AG04449 (cell line): ENCODE measurements at regions of chr9 and their contacts with region 1.

Region 1: GRCh38 chr9:34994260-34994899 is 4.8 kb downstream of the DNAJB5 start:
- DNase-seq: no peak
- H3K4me3 ChIP-seq: no peak overlapping the region
- CTCF ChIP-seq: peak; percentile 78

Region 2: DNA sequence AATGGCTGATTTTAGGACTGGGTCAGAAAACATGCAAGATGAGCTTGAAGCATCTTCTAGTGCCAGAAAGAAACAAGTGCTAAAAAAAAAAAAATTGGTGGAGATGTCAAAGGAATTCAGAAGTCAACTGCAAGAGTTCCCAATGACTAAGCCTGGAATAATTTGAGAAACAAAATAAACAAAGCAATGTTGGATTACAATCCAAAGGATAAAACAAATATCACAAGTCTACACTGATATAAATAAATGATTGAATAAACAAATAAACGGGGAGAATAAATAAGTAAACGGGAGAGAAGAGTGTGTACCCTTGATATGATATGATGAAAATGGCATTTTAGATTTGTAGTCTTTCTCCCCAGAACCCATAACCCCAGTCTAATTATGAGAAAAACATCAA is 221.0 kb before region 1 on chr9:
- CTCF ChIA-PET with region 1: no interaction called
- POLR2A ChIA-PET with region 1: no interaction called
- DNase-seq: no peak
- H3K4me3 ChIP-seq: no peak overlapping the region
- CTCF ChIP-seq: no peak

Region 3: DNA sequence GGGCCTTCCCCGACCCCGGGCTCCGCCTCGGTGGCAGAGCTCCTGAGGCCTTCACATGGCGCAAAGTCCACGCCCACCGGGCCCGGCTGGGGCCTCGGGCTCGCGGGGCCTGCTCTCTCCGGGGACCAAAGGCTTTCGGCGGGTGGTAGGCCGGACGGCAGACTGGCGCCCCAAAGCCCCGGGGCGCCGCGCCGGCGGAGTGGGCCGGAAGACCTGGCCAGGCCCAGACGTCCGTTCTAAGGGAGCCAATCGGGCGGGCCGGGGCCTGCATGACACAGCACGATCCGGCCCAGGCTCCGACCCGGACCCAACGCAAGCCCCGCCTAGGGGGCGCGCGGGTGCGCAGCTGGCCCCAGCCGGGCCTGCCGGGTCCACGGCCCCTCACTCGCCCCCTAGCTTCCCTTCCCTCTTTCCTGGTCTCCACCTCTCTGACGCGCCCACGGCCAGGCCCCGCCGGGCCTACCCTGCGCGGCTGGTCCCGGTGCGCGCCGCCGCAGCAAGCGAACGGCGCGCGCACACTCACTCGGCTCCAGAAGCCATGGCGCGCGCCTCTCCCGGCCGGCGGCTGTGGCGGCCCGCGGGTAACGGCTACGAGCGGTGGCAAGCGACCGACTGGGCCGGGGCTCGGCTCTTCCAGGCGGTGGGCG is 77.6 kb after region 1 on chr9:
- CTCF ChIA-PET with region 1: interaction called, 10 read pairs
- POLR2A ChIA-PET with region 1: interaction called, 5 read pairs
- DNase-seq: no peak
- H3K4me3 ChIP-seq: peak overlapping the region; percentile 94
- CTCF ChIP-seq: peak; percentile 40

Region 4: DNA sequence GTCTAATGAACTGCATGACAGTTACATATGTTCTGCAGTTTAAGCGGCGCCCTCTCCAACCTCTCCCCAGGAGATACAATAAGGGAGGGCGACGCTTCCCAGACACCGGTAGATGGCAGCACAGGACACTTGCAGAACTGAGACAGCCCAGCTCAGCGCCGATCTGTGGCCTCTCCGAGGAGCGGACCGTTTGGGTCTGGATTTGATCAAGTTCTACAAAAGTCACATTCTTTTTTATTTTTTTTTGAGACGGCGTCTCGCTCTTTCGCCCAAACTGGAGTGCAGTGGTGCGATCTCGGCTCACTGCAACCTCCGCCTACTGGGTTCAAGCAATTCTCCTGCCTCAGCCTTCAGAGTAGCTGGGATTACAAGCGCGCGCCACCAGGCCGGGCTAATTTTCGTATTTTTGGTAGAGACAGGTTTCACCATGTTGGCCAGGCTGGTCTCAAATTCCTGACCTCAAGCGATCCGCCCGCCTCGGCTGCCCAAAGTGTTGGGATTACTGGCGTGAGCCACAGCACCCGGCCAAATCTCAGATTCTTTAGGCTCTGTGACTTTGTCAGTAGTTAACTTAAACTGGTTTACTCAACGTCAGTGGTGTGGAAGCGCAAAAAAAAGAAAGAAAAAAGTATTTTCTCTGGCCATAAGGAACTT is 122.6 kb after region 1 on chr9:
- CTCF ChIA-PET with region 1: no interaction called
- POLR2A ChIA-PET with region 1: no interaction called
- DNase-seq: peak; percentile 63
- H3K4me3 ChIP-seq: peak overlapping the region; percentile 99
- CTCF ChIP-seq: peak; percentile 98

Region 5: DNA sequence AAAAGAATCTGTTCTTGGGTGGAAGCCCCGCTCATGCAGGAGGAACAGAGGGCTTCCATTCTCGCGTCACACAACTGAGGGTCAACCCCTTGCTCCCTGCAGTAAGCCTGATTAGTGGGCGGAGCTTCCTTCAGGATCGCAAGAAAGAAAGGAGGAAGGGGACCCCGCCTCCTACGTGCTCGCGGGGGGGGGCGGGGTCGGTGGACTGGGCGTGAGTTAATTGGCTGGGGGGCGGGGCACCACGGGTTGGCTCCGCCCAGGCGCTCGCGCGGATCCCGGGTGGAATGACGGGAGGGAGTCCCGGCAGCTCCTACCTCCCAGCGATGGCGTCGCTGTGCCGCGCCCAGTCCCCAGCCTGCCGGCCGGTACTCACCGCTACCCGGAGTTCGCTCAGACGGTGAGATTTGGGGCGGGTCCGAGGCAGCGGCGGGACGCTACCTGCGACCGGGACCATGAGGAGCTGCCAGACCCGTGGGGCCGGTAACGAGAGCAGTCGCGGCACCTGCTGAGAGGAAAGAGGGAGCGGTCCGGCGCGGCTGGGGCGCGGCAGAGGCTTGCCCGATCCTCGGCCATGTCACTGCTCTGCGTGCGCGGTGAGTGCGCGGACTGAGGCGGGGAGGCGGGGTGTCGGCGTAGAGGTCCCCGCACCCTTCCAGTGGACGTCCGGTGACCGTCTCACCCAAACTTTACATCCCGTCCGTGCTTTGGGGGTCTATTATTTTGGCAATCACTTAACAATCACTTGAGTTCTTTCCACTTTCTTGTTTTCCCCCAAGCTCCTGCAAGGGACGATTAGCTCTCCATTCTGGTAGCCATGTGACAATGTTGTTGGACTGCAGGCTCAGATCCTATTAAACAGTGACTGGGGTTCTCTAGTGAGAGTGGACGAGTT is 167.6 kb after region 1 on chr9 and contains the start of gene UNC13B:
- CTCF ChIA-PET with region 1: no interaction called
- POLR2A ChIA-PET with region 1: no interaction called
- DNase-seq: no peak
- H3K4me3 ChIP-seq: peak within 1 kb of the TSS; percentile 90
- CTCF ChIP-seq: no peak